Naive thymus-derived CD4-positive, alpha-beta T cell (primary cell): ENCODE measurements at regions of chr17 and their contacts with region 1.

Region 1: DNA sequence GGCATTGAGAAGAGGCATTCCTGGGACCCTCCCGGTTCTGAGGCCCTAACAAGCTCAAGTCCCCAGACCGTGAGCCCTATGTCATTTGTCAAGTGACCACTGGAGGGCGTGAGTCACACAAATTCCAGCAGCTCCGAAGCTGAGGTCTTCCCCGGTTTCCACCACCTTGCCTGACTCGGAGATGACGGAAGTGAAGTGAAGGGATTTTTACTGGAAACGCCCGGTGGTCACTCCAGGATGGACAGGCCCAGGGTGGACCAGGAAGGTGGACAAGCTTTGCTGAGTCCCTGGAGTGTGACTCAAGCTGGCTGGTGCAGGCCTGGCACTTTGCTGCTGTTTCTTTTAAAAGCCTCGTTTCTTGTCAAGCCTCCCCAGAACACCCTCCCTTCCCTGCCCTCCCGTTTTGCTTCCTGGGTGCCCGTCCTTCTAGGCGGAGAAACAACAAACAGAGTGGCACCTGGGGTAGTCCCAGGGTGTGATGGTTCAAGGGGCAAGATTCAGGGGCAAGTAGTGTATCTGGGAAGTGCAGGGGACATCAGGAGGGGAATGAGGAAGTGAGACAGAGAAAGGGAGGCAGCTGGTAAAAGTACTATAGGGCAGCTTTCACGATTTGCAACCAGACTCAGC is 5.3 kb upstream of the NOS2 start:
- DNase-seq: peak; percentile 60 to 87 (median 79)
- ATAC-seq: peak; percentile 83
- H3K4me3 ChIP-seq: peak overlapping the region; percentile 57
- H3K4me3 Mint-ChIP-seq: peak overlapping the region; percentile 77 to 90 (median 85)
- H3K27ac ChIP-seq: peak overlapping the region; percentile 70
- H3K27ac Mint-ChIP-seq: peak overlapping the region; percentile 81 to 98 (median 95)
- H3K4me1 ChIP-seq: peaks cover 24 to 25% of the 10 kb centered on the region in 2 donors
- H3K4me1 Mint-ChIP-seq: peaks cover 20 to 45% (median 29%) of the 10 kb centered on the region in 7 donors
- H3K27me3 ChIP-seq: no peaks in the 10 kb centered on the region
- H3K27me3 Mint-ChIP-seq: peaks cover 0 to 5% (median 0%) of the 10 kb centered on the region in 5 donors

Region 2: GRCh38 chr17:27473748-27474609 is 331.7 kb before region 1 on chr17:
- CTCF ChIA-PET with region 1: no interaction called
- POLR2A ChIA-PET with region 1: no interaction called
- intact Hi-C with region 1: loop called in 1 of 2 experiments (anchors 2 kb)
- DNase-seq: peak in 6 of 9 donors; percentile 12 to 76 (median 18)
- ATAC-seq: peak; percentile 85
- H3K4me3 ChIP-seq: peak overlapping the region; percentile 11
- H3K4me3 Mint-ChIP-seq: peak overlapping the region; percentile 16 to 86 (median 64)
- H3K27ac ChIP-seq: peak overlapping the region; percentile 43
- H3K27ac Mint-ChIP-seq: peak overlapping the region; percentile 76 to 97 (median 89)
- H3K4me1 ChIP-seq: peaks cover 19 to 44% of the 10 kb centered on the region in 2 donors
- H3K4me1 Mint-ChIP-seq: peaks cover 41 to 89% (median 49%) of the 10 kb centered on the region in 7 donors
- H3K27me3 ChIP-seq: no peaks in the 10 kb centered on the region
- H3K27me3 Mint-ChIP-seq: no peaks in the 10 kb centered on the region

Region 3: GRCh38 chr17:27760069-27760885 is 45.4 kb before region 1 on chr17:
- CTCF ChIA-PET with region 1: interaction called, 3 read pairs
- POLR2A ChIA-PET with region 1: no interaction called
- intact Hi-C with region 1: loop called in 1 of 2 experiments (anchors 1 kb)
- DNase-seq: peak; percentile 28 to 77 (median 59)
- ATAC-seq: peak; percentile 73
- H3K4me3 ChIP-seq: no peak overlapping the region
- H3K4me3 Mint-ChIP-seq: no peak overlapping the region
- H3K27ac ChIP-seq: no peak overlapping the region
- H3K27ac Mint-ChIP-seq: no peak overlapping the region
- H3K4me1 ChIP-seq: no peaks in the 10 kb centered on the region
- H3K4me1 Mint-ChIP-seq: peaks cover 0 to 7% (median 0%) of the 10 kb centered on the region in 7 donors
- H3K27me3 ChIP-seq: no peaks in the 10 kb centered on the region
- H3K27me3 Mint-ChIP-seq: no peaks in the 10 kb centered on the region

Region 4: GRCh38 chr17:27879987-27880608 is 74.5 kb after region 1 on chr17:
- CTCF ChIA-PET with region 1: interaction called, 140 read pairs
- POLR2A ChIA-PET with region 1: interaction called, 13 read pairs
- intact Hi-C with region 1: loop called (anchors 1 kb)
- DNase-seq: peak; percentile 23 to 70 (median 54)
- ATAC-seq: peak; percentile 84
- H3K4me3 ChIP-seq: no peak overlapping the region
- H3K4me3 Mint-ChIP-seq: peak overlapping the region in 7 of 10 donors; percentile 14 to 77 (median 51)
- H3K27ac ChIP-seq: no peak overlapping the region
- H3K27ac Mint-ChIP-seq: peak overlapping the region in 3 of 9 donors; percentile 25 to 70 (median 62)
- H3K4me1 ChIP-seq: peaks cover 4 to 16% of the 10 kb centered on the region in 2 donors
- H3K4me1 Mint-ChIP-seq: peaks cover 19 to 37% (median 24%) of the 10 kb centered on the region in 7 donors
- H3K27me3 ChIP-seq: no peaks in the 10 kb centered on the region
- H3K27me3 Mint-ChIP-seq: no peaks in the 10 kb centered on the region

Region 5: GRCh38 chr17:28008542-28008941 is 202.9 kb after region 1 on chr17:
- CTCF ChIA-PET with region 1: no interaction called
- POLR2A ChIA-PET with region 1: no interaction called
- intact Hi-C with region 1: no loop called
- DNase-seq: no peak
- ATAC-seq: no peak
- H3K4me3 ChIP-seq: no peak overlapping the region
- H3K4me3 Mint-ChIP-seq: no peak overlapping the region
- H3K27ac ChIP-seq: no peak overlapping the region
- H3K27ac Mint-ChIP-seq: no peak overlapping the region
- H3K4me1 ChIP-seq: no peaks in the 10 kb centered on the region
- H3K4me1 Mint-ChIP-seq: no peaks in the 10 kb centered on the region
- H3K27me3 ChIP-seq: peaks cover 0 to 4% of the 10 kb centered on the region in 2 donors
- H3K27me3 Mint-ChIP-seq: peaks cover 0 to 11% (median 4%) of the 10 kb centered on the region in 5 donors

Region 6: GRCh38 chr17:28041068-28041843 is 235.6 kb after region 1 on chr17:
- CTCF ChIA-PET with region 1: no interaction called
- POLR2A ChIA-PET with region 1: no interaction called
- intact Hi-C with region 1: loop called (anchors 1 kb)
- DNase-seq: peak; percentile 94 to 99 (median 99)
- ATAC-seq: peak; percentile 96
- H3K4me3 ChIP-seq: peak overlapping the region; percentile 45
- H3K4me3 Mint-ChIP-seq: peak overlapping the region; percentile 82 to 92 (median 88)
- H3K27ac ChIP-seq: peak overlapping the region; percentile 71
- H3K27ac Mint-ChIP-seq: peak overlapping the region; percentile 75 to 93 (median 88)
- H3K4me1 ChIP-seq: peaks cover 28 to 40% of the 10 kb centered on the region in 2 donors
- H3K4me1 Mint-ChIP-seq: peaks cover 35 to 65% (median 60%) of the 10 kb centered on the region in 7 donors
- H3K27me3 ChIP-seq: no peaks in the 10 kb centered on the region
- H3K27me3 Mint-ChIP-seq: peaks cover 0 to 16% (median 0%) of the 10 kb centered on the region in 5 donors

Region 7: GRCh38 chr17:28161311-28161710 is 355.7 kb after region 1 on chr17:
- CTCF ChIA-PET with region 1: no interaction called
- POLR2A ChIA-PET with region 1: no interaction called
- intact Hi-C with region 1: no loop called
- DNase-seq: no peak
- ATAC-seq: no peak
- H3K4me3 ChIP-seq: no peak overlapping the region
- H3K4me3 Mint-ChIP-seq: no peak overlapping the region
- H3K27ac ChIP-seq: no peak overlapping the region
- H3K27ac Mint-ChIP-seq: no peak overlapping the region
- H3K4me1 ChIP-seq: no peaks in the 10 kb centered on the region
- H3K4me1 Mint-ChIP-seq: no peaks in the 10 kb centered on the region
- H3K27me3 ChIP-seq: no peaks in the 10 kb centered on the region
- H3K27me3 Mint-ChIP-seq: no peaks in the 10 kb centered on the region

Region 8: DNA sequence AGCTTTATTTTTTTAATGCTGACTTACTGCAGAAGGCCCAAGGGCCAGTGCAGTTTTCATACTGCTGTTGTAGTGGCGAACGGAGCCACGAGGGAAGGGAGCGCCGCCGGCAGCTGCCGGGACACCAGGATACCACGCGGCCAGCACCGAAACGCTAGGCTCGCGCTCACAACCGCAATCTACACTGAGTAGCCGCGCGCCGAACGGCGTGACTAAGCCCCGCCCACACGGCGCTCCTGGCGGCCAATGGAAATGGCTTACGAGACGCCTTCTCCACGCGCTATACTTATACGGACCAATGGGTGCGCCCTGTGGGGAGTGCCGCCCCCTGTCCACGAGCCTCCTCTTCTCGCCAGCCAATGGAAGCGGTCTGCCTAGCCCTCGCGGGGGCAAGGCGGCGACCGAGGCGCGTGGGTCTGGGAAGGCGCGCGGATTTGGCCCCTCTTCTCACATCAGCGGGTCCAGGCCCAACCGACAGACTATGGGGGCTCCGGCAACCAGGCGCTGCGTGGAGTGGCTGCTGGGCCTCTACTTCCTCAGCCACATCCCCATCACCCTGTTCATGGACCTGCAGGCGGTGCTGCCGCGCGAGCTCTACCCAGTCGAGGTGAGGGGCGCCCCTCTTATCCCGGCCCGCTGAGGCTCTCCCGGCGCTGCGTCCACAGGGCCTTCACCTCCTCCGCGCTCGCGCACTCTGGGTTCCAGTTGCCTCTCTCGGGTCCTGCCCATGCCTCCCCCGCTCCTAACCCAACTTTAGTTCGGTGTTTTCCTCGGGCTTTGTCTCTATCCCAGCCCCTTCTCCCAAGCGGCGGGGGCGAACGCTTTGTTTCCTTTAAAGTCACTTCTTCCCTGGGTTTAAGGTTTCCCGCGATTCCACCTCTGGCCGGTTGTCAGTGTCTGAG is 513.4 kb after region 1 on chr17 and contains the start of gene TMEM97:
- CTCF ChIA-PET with region 1: no interaction called
- POLR2A ChIA-PET with region 1: no interaction called
- intact Hi-C with region 1: loop called (anchors 2 to 5 kb)
- DNase-seq: peak; percentile 83 to 95 (median 93)
- ATAC-seq: peak; percentile 99
- H3K4me3 ChIP-seq: peak within 1 kb of the TSS; percentile 69
- H3K4me3 Mint-ChIP-seq: peak within 1 kb of the TSS; percentile 77 to 97 (median 91)
- H3K27ac ChIP-seq: peak within 1 kb of the TSS; percentile 64
- H3K27ac Mint-ChIP-seq: peak within 1 kb of the TSS; percentile 37 to 90 (median 80)
- H3K4me1 ChIP-seq: peaks cover 11 to 12% of the 10 kb centered on the region in 2 donors
- H3K4me1 Mint-ChIP-seq: peaks cover 9 to 40% (median 21%) of the 10 kb centered on the region in 7 donors
- H3K27me3 ChIP-seq: no peaks in the 10 kb centered on the region
- H3K27me3 Mint-ChIP-seq: no peaks in the 10 kb centered on the region
- total RNA-seq, gene TMEM97: 2.9 to 19.9 (median 4.8) TPM